ENCODE measurements at regions of chr5 and their contacts with region 1.

Region 1: GRCh38 chr5:174596429-174596828 is 128.0 kb upstream of the MSX2 start:
- DNase-seq: no peak
- H3K27ac ChIP-seq: no peak overlapping the region
- CTCF ChIP-seq: no peak

Region 2: GRCh38 chr5:174514983-174515394 is 81.4 kb before region 1 on chr5:
- CTCF ChIA-PET with region 1: no interaction called
- POLR2A ChIA-PET with region 1: no interaction called
- DNase-seq: no peak
- H3K27ac ChIP-seq: no peak overlapping the region
- CTCF ChIP-seq: no peak

Region 3: GRCh38 chr5:174549254-174549653 is 47.2 kb before region 1 on chr5:
- CTCF ChIA-PET with region 1: no interaction called
- POLR2A ChIA-PET with region 1: no interaction called
- DNase-seq: no peak
- H3K27ac ChIP-seq: no peak overlapping the region
- CTCF ChIP-seq: no peak

Region 4: DNA sequence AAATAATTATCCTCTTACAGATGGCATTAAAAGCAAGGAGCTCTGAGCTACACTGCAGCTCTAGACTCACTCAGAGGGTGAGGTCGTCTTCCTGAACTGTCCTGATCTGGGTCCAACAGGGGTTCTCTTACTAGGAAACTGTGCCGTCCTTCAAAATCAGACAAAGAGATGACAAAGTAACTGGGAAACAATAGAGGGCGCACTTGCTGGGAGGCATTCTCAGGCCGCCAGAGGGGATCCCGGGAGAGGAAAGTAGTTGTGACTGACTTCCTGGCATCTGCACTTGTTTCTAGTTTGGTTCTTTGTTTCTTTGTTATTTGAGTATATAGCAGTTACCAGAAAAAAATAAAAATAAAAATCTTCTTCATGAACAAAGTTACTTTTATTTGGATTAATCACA is 14.9 kb before region 1 on chr5:
- CTCF ChIA-PET with region 1: interaction called, 4 read pairs
- POLR2A ChIA-PET with region 1: interaction called, 13 read pairs
- DNase-seq: no peak
- H3K27ac ChIP-seq: no peak overlapping the region
- CTCF ChIP-seq: no peak; the same call in 1 of the 2 replicates

Region 5: DNA sequence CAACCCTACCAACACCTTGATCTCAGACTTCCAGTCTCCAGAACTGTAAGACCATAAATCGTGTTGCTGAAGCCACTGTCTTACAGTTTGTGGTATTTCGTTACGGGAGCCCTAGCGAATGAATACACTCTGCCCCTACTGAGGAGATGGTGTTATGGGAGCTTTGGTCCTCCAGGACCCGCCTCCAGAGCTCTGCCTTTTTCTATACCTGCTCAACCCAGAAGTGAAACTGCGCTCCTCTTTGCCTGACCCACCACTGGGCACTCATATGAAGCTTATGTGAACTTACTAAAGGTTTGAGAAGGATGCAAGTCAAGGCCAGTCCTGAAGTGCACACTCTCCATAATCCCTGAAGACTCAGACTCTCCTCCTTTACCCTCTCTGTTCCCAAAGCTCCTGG is 17.2 kb after region 1 on chr5:
- CTCF ChIA-PET with region 1: no interaction called
- POLR2A ChIA-PET with region 1: no interaction called
- DNase-seq: no peak
- H3K27ac ChIP-seq: no peak overlapping the region
- CTCF ChIP-seq: no peak

Region 6: DNA sequence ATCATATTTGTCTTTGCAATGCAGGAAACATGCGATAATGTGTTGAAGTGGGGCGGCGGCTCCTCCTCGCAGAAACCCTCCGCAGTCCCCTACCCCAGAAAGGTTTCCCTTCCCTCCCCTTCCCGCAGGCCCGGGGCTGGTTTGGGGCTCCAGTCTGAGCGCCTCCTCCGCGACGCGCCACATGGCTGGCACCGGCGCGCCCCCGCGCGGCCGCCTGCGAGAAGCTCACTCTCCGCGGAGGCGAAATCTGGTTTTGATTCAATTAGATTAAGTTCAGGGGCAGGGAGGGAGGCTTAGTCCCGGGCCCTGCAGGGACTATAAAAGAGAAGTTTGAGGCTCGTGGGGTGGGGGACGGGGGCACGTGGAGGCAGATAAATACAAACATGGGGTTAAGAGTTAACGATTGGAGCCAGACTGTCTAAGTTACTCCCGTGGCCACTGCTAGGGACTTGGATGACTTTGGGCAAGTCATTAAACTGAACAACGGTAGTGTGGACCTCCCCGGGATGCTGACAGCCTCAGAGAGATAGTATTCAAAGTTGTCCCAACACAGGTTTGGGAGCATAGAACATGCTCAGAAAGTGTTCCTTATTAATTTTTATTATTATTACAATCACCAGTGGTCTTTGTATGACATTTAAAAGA is 197.4 kb after region 1 on chr5:
- CTCF ChIA-PET with region 1: no interaction called
- POLR2A ChIA-PET with region 1: no interaction called
- DNase-seq: peak; percentile 68
- H3K27ac ChIP-seq: no peak overlapping the region
- CTCF ChIP-seq: peak; percentile 95